PC-3 (cell line): ENCODE measurements at regions of chr9 and their contacts with region 1.

Region 1: GRCh38 chr9:94576131-94576530 is 17.5 kb downstream of the FBP2 start:
- DNase-seq: no peak
- ATAC-seq: no peak
- H3K4me3 ChIP-seq: no peak overlapping the region
- H3K27ac ChIP-seq: no peak overlapping the region
- H3K4me1 ChIP-seq: no peaks in the 10 kb centered on the region
- H3K27me3 ChIP-seq: no peaks in the 10 kb centered on the region
- CTCF ChIP-seq: no peak

Region 2: GRCh38 chr9:94157050-94157764 is 418.9 kb before region 1 on chr9:
- CTCF ChIA-PET with region 1: interaction called, 10 read pairs
- POLR2A ChIA-PET with region 1: no interaction called
- intact Hi-C with region 1: no loop called
- DNase-seq: peak; percentile 38
- ATAC-seq: peak; percentile 54
- H3K4me3 ChIP-seq: no peak overlapping the region
- H3K27ac ChIP-seq: no peak overlapping the region
- H3K4me1 ChIP-seq: peaks cover 10% of the 10 kb centered on the region; the same call in 1 of the 2 replicates
- H3K27me3 ChIP-seq: no peaks in the 10 kb centered on the region
- CTCF ChIP-seq: no peak